CD8-positive, alpha-beta memory T cell (primary cell): ENCODE measurements at regions of chr3 and their contacts with region 1.

Region 1: GRCh38 chr3:132682201-132682600 is 22.1 kb downstream of the UBA5 start:
- DNase-seq: no peak
- H3K4me3 ChIP-seq: no peak overlapping the region
- H3K4me3 Mint-ChIP-seq: no peak overlapping the region
- H3K27ac ChIP-seq: no peak overlapping the region
- H3K27ac Mint-ChIP-seq: peak overlapping the region in 4 of 8 donors; percentile 24 to 67 (median 34)
- H3K4me1 ChIP-seq: no peaks in the 10 kb centered on the region
- H3K4me1 Mint-ChIP-seq: no peaks in the 10 kb centered on the region
- H3K27me3 ChIP-seq: no peaks in the 10 kb centered on the region
- H3K27me3 Mint-ChIP-seq: no peaks in the 10 kb centered on the region

Region 2: GRCh38 chr3:132486086-132486485 is 196.1 kb before region 1 on chr3:
- CTCF ChIA-PET with region 1: no interaction called
- POLR2A ChIA-PET with region 1: interaction called, 10 read pairs
- DNase-seq: no peak
- H3K4me3 ChIP-seq: no peak overlapping the region
- H3K4me3 Mint-ChIP-seq: no peak overlapping the region
- H3K27ac ChIP-seq: no peak overlapping the region
- H3K27ac Mint-ChIP-seq: peak overlapping the region in 1 of 8 donors; percentile 54
- H3K4me1 ChIP-seq: no peaks in the 10 kb centered on the region
- H3K4me1 Mint-ChIP-seq: no peaks in the 10 kb centered on the region
- H3K27me3 ChIP-seq: no peaks in the 10 kb centered on the region
- H3K27me3 Mint-ChIP-seq: no peaks in the 10 kb centered on the region